ENCODE measurements at regions of chr2 and their contacts with region 1.

Region 1: DNA sequence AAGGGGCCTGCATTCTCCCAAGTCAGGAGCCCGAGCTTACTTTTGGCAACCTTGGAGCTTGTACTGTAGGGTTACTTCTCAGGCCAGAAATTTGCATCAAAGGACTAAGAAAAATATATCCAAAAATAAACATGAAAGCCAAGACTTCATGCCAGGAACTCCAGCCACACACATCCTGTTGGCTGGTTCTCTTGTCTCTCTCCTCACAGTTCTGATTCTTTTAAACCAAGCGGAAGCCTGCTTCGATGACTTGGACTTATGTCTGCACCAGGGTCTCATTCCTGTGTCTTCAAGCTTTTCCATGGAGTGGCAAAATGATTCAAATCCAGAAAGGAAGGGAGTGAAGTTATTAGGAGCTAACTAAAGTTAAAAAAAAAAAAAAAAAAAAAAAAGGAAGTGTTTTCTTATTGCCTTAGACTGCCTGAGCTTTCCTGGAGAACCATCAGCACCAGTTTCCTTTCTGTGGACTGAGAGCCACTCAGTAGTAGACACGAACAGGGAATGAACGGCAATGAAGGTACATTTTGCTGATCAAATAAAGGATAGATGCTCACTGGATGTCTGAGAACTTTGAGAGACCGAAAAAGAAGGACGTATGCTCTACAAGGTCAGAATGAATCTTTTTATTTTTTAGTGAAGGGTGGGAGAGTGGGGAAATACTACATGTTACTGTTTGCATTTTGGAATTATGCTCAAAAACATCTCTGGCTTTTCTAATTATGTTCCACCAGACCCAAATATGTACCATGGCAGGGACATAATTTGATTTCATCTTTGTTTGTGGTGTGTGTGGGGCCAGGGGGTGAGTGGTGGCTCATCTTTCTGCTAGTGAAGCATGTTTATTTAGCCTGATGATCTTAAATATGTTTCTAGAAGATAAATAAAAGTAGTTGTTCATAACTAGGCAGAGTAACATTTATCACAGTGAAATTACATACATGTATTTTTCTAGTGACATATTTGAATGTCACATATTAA is 86.0 kb downstream of the RAPGEF4 start:
- DNase-seq: no peak
- CTCF ChIP-seq: no peak

Region 2: GRCh38 chr2:172726172-172726735 is 95.4 kb before region 1 on chr2:
- CTCF ChIA-PET with region 1: no interaction called
- POLR2A ChIA-PET with region 1: no interaction called
- DNase-seq: no peak
- CTCF ChIP-seq: no peak

Region 3: GRCh38 chr2:172806493-172806892 is 15.2 kb before region 1 on chr2:
- CTCF ChIA-PET with region 1: interaction called, 15 read pairs
- POLR2A ChIA-PET with region 1: no interaction called
- DNase-seq: peak; percentile 26
- CTCF ChIP-seq: peak; percentile 80

Region 4: GRCh38 chr2:173048897-173049661 is 227.4 kb after region 1 on chr2:
- CTCF ChIA-PET with region 1: no interaction called
- POLR2A ChIA-PET with region 1: no interaction called
- DNase-seq: peak; percentile 29
- CTCF ChIP-seq: no peak